ENCODE measurements at regions of chr5 and their contacts with region 1.

Region 1: GRCh38 chr5:96978812-96979449 is 43.1 kb downstream of the LNPEP start:
- DNase-seq: no peak
- H3K4me3 ChIP-seq: no peak overlapping the region
- H3K4me3 Mint-ChIP-seq: no peak overlapping the region
- H3K27ac ChIP-seq: no peak overlapping the region
- H3K27ac Mint-ChIP-seq: peak overlapping the region in 1 of 7 donors; percentile 30
- H3K4me1 ChIP-seq: peaks cover 30% of the 10 kb centered on the region
- H3K4me1 Mint-ChIP-seq: peaks cover 43 to 56% (median 48%) of the 10 kb centered on the region in 4 donors
- H3K27me3 ChIP-seq: no peaks in the 10 kb centered on the region
- H3K27me3 Mint-ChIP-seq: no peaks in the 10 kb centered on the region

Region 2: GRCh38 chr5:96968614-96969013 is 10.3 kb before region 1 on chr5:
- CTCF ChIA-PET with region 1: no interaction called
- POLR2A ChIA-PET with region 1: no interaction called
- intact Hi-C with region 1: no loop called
- DNase-seq: no peak
- H3K4me3 ChIP-seq: no peak overlapping the region
- H3K4me3 Mint-ChIP-seq: peak overlapping the region in 6 of 8 donors; percentile 16 to 53 (median 29)
- H3K27ac ChIP-seq: no peak overlapping the region
- H3K27ac Mint-ChIP-seq: peak overlapping the region in 5 of 7 donors; percentile 0 to 86 (median 50)
- H3K4me1 ChIP-seq: peaks cover 89% of the 10 kb centered on the region
- H3K4me1 Mint-ChIP-seq: peaks cover 63 to 87% (median 74%) of the 10 kb centered on the region in 4 donors
- H3K27me3 ChIP-seq: no peaks in the 10 kb centered on the region
- H3K27me3 Mint-ChIP-seq: no peaks in the 10 kb centered on the region

Region 3: DNA sequence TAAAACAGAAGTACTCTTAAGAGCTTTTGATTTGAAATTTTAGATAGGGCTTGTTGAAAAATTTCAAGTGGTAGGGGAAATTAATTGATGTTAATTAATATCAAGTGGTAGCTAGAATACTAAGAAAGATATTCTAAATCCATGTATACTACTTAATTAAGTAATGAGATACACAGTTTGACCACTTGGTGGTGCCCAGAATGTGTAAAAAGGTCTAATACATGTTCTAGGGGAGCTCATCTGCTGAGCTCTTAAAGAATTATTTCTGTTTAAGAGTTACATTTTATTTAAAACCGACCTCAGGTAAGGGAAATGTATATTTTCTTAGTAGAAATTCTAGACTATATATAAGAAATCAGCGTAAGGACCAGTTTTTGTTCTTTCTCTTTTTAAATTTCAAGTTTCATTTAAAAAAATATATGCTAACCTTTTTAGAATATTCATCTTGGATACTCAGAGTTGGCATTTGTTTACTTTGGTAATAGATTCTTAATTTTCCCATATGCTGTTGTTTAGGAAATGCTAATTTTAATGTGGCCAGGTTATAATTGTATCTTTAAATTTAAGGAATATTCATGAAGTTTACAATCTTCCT is 18.4 kb after region 1 on chr5:
- CTCF ChIA-PET with region 1: interaction called, 4 read pairs
- POLR2A ChIA-PET with region 1: no interaction called
- intact Hi-C with region 1: loop called (anchors 2 kb)
- DNase-seq: peak in 4 of 5 donors; percentile 14 to 24 (median 18)
- H3K4me3 ChIP-seq: no peak overlapping the region
- H3K4me3 Mint-ChIP-seq: no peak overlapping the region
- H3K27ac ChIP-seq: no peak overlapping the region
- H3K27ac Mint-ChIP-seq: peak overlapping the region in 2 of 7 donors; percentile 37 to 43
- H3K4me1 ChIP-seq: no peaks in the 10 kb centered on the region
- H3K4me1 Mint-ChIP-seq: peaks cover 8 to 22% (median 14%) of the 10 kb centered on the region in 4 donors
- H3K27me3 ChIP-seq: no peaks in the 10 kb centered on the region
- H3K27me3 Mint-ChIP-seq: no peaks in the 10 kb centered on the region